GM12878 (cell line): ENCODE measurements at regions of chr2 and their contacts with region 1.

Region 1: GRCh38 chr2:230987137-230988020 is 8.5 kb upstream of the SPATA3 start:
- DNase-seq: no peak
- ATAC-seq: peak; percentile 49
- H3K4me3 ChIP-seq: peak overlapping the region; percentile 89
- H3K27ac ChIP-seq: peak overlapping the region; percentile 100
- H3K4me1 ChIP-seq: peaks cover 42% of the 10 kb centered on the region
- H3K27me3 ChIP-seq: no peaks in the 10 kb centered on the region; a peak in 1 of 4 replicates
- CTCF ChIP-seq: peak; percentile 85 to 98 (median 92); a peak in 5 of 6 replicates
- EP300 ChIP-seq: no peak
- POLR2A ChIP-seq: no peak
- RAD21 ChIP-seq: peak; percentile 98

Region 2: GRCh38 chr2:230830428-230830827 is 157.0 kb before region 1 on chr2:
- CTCF ChIA-PET with region 1: interaction called, 5 read pairs
- POLR2A ChIA-PET with region 1: no interaction called
- RAD21 ChIA-PET with region 1: interaction called, 52 read pairs
- SMC1A ChIA-PET with region 1: interaction called, 3 read pairs
- in situ Hi-C with region 1: loop called (anchors 5 kb)
- intact Hi-C with region 1: no loop called
- DNase-seq: no peak
- ATAC-seq: no peak
- H3K4me3 ChIP-seq: no peak overlapping the region
- H3K27ac ChIP-seq: no peak overlapping the region
- H3K4me1 ChIP-seq: peaks cover 5% of the 10 kb centered on the region; the same call in 1 of the 2 replicates
- H3K27me3 ChIP-seq: no peaks in the 10 kb centered on the region; a peak in 1 of 4 replicates
- CTCF ChIP-seq: no peak
- EP300 ChIP-seq: no peak
- POLR2A ChIP-seq: no peak
- RAD21 ChIP-seq: no peak

Region 3: DNA sequence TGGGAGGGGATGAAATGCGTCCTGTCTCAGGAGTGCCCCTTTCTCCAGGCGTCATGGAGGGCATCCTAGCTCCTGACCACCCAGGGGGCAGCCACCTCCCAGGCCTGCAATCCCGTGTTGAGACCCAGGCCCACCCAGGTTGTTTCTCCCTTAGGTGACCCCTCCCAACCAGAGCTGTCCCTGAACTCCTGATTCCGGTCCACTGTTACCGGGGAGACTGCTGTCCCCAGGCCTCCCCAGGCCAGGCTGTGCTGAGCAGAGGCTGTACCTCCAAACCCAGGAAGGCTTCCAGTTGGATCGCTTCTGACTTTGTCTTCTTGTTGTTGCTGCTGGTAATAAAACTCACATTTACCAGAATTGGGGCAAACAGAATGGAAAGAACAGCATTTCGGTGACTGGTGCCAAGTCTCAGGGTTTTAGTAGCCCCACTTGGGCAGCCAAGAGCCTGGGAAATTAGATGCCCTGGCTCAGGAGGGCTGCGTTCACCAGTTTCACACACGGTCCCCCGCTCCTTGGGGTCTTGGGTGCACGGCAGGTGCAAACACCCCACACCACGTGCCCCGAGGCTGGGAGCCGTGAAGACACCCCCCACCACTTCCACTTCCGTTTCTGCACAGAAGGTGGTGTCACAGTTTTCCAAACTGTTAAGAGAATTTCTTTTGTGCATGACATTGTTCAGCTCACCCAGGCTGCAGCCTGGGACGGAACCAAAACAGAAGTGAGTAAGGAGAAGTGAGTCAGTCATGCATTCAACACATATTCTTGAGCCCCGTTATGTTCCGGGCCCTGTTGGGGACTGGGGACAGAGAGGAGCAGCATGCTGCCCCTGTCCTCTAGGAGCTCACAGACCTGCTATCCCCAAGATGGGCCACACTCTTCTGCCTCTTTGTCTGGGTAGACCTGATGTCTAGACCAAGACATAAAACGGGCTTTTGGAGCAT is 93.3 kb before region 1 on chr2:
- CTCF ChIA-PET with region 1: interaction called, 198 read pairs
- POLR2A ChIA-PET with region 1: no interaction called
- RAD21 ChIA-PET with region 1: interaction called, 99 read pairs
- SMC1A ChIA-PET with region 1: interaction called, 122 read pairs
- in situ Hi-C with region 1: no loop called
- intact Hi-C with region 1: no loop called
- DNase-seq: no peak
- ATAC-seq: peak; percentile 71
- H3K4me3 ChIP-seq: no peak overlapping the region
- H3K27ac ChIP-seq: 0 out of 2 replicates have a peak overlapping the region, but pooled peaks have one; percentile 7
- H3K4me1 ChIP-seq: peaks cover 39% of the 10 kb centered on the region
- H3K27me3 ChIP-seq: no peaks in the 10 kb centered on the region
- CTCF ChIP-seq: no peak
- EP300 ChIP-seq: no peak; a peak in 1 of 4 replicates
- POLR2A ChIP-seq: no peak
- RAD21 ChIP-seq: no peak

Region 4: GRCh38 chr2:230924470-230925341 is 62.7 kb before region 1 on chr2 and contains the start of gene GPR55:
- CTCF ChIA-PET with region 1: interaction called, 315 read pairs
- POLR2A ChIA-PET with region 1: interaction called, 117 read pairs
- RAD21 ChIA-PET with region 1: interaction called, 261 read pairs
- SMC1A ChIA-PET with region 1: interaction called, 219 read pairs
- in situ Hi-C with region 1: loop called (anchors 10 kb)
- intact Hi-C with region 1: loop called (anchors 1 kb)
- DNase-seq: peak; percentile 56
- ATAC-seq: peak; percentile 51
- H3K4me3 ChIP-seq: peak within 1 kb of the TSS; percentile 78
- H3K27ac ChIP-seq: peak within 1 kb of the TSS; percentile 98
- H3K4me1 ChIP-seq: peaks cover 42% of the 10 kb centered on the region
- H3K27me3 ChIP-seq: no peaks in the 10 kb centered on the region
- CTCF ChIP-seq: peak; percentile 69 to 78 (median 75)
- EP300 ChIP-seq: peak in 1 of 2 experiments; percentile 44; a peak in 2 of 4 replicates
- POLR2A ChIP-seq: peak; percentile 78
- RAD21 ChIP-seq: peak; percentile 64
- polyA plus RNA-seq, gene GPR55: 2.1 to 5.5 TPM

Region 5: GRCh38 chr2:230956827-230957755 is 30.3 kb before region 1 on chr2:
- CTCF ChIA-PET with region 1: interaction called, 372 read pairs
- POLR2A ChIA-PET with region 1: interaction called, 144 read pairs
- RAD21 ChIA-PET with region 1: interaction called, 400 read pairs
- SMC1A ChIA-PET with region 1: interaction called, 411 read pairs
- in situ Hi-C with region 1: no loop called
- intact Hi-C with region 1: loop called (anchors 1 kb)
- DNase-seq: peak; percentile 91
- ATAC-seq: peak; percentile 79
- H3K4me3 ChIP-seq: peak overlapping the region; percentile 72
- H3K27ac ChIP-seq: peak overlapping the region; percentile 99
- H3K4me1 ChIP-seq: peaks cover 54% of the 10 kb centered on the region
- H3K27me3 ChIP-seq: no peaks in the 10 kb centered on the region
- CTCF ChIP-seq: no peak
- EP300 ChIP-seq: peak; percentile 84 to 92; a peak in 2 of 4 replicates
- POLR2A ChIP-seq: peak; percentile 87
- RAD21 ChIP-seq: peak; percentile 37; the same call in 1 of the 2 replicates

Region 6: DNA sequence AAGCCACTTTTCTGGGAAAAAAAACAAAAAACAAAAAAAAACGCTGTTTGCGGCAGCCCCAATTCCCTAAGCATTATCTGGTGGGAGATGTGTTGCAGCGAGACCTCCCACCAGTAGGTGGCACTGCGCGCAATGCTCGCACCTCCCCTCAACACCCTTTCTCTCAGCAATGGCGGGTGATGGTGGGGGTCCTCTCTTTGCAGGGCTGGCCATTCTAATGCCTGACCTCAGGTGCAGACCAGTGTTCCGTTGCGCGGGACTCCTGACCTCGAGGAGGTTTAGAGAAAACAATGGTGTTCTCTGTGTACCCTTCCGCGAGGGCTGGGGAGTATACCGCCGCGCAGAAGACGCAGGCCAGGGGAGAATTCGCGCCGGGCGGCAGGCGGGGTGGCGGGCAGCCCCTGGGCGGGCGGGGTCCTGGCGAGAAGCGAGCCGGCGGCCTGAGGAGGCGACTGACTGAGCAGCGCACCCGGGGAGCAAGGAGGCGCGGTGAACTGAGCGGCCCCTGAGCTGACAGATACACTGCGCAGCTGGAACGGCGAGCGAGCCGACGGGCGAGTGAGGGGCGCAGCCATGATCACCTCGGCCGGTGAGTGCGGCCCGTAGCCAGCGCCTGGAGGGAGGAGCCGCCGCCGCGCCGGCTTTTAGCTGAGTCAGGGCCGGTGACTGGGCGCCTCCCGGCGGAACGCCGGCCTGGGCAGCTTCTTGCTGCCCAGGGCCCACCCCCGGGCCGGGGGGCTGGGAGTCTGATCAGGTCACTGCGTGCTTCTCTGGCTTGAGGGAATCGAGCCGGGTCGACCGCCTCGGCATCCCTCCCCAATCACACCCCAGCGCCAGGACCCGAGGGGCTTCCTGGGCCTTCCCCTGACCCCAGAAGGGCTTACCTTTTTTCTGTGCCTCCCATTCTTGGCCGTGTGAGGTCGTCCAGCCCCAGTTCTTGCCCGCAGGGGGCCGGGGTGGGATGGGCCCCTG is 69.4 kb after region 1 on chr2 and contains the start of gene PSMD1:
- CTCF ChIA-PET with region 1: interaction called, 36 read pairs
- POLR2A ChIA-PET with region 1: no interaction called
- RAD21 ChIA-PET with region 1: interaction called, 8 read pairs
- SMC1A ChIA-PET with region 1: interaction called, 3 read pairs
- in situ Hi-C with region 1: no loop called
- intact Hi-C with region 1: loop called (anchors 5 kb)
- DNase-seq: peak; percentile 80
- ATAC-seq: peak; percentile 87
- H3K4me3 ChIP-seq: peak within 1 kb of the TSS; percentile 90
- H3K27ac ChIP-seq: peak within 1 kb of the TSS; percentile 92
- H3K4me1 ChIP-seq: peaks cover 8% of the 10 kb centered on the region; the same call in 1 of the 2 replicates
- H3K27me3 ChIP-seq: no peaks in the 10 kb centered on the region
- CTCF ChIP-seq: peak; percentile 89 to 98 (median 94)
- EP300 ChIP-seq: 0 out of 4 replicates have a peak, but pooled peaks of 1 of the 2 experiments have one; percentile 10
- POLR2A ChIP-seq: peak; percentile 92
- RAD21 ChIP-seq: no peak
- polyA plus RNA-seq, gene PSMD1: 96.4 to 220 TPM